ENCODE measurements at regions of chr7 and their contacts with region 1.

Region 1: GRCh38 chr7:112383671-112384417 is 66.4 kb upstream of the IFRD1 start:
- ATAC-seq: peak in 1 of 8 experiments; percentile 51
- H3K4me3 ChIP-seq: no peak overlapping the region
- H3K27ac ChIP-seq: no peak overlapping the region
- H3K4me1 ChIP-seq: no peaks in the 10 kb centered on the region

Region 2: GRCh38 chr7:112206238-112207044 is 177.4 kb before region 1 on chr7 and contains the starts of genes DOCK4 and ZNF277:
- in situ Hi-C with region 1: loop called in 1 of 9 experiments (anchors 25 kb)
- ATAC-seq: peak; percentile 81 to 91 (median 88)
- H3K4me3 ChIP-seq: peak within 1 kb of the TSS; percentile 64 to 98 (median 82)
- H3K27ac ChIP-seq: peak within 1 kb of the TSS; percentile 50 to 70
- H3K4me1 ChIP-seq: peaks cover 0 to 5% of the 10 kb centered on the region in 2 donors
- total RNA-seq, gene DOCK4: 8.1 to 27.3 (median 20.6) TPM
- total RNA-seq, gene ZNF277: 20.7 to 29.9 (median 28.0) TPM